BJ (cell line): ENCODE measurements at regions of chr2 and their contacts with region 1.

Region 1: GRCh38 chr2:119290859-119291587 is 67.4 kb downstream of the STEAP3 start:
- DNase-seq: no peak
- H3K4me3 ChIP-seq: no peak overlapping the region
- H3K27me3 ChIP-seq: no peaks in the 10 kb centered on the region
- CTCF ChIP-seq: peak; percentile 99

Region 2: GRCh38 chr2:118882709-118883210 is 408.3 kb before region 1 on chr2:
- CTCF ChIA-PET with region 1: interaction called, 71 read pairs
- POLR2A ChIA-PET with region 1: no interaction called
- DNase-seq: no peak
- H3K4me3 ChIP-seq: no peak overlapping the region
- H3K27me3 ChIP-seq: no peaks in the 10 kb centered on the region; the same call in 1 of the 2 replicates
- CTCF ChIP-seq: peak; percentile 87

Region 3: DNA sequence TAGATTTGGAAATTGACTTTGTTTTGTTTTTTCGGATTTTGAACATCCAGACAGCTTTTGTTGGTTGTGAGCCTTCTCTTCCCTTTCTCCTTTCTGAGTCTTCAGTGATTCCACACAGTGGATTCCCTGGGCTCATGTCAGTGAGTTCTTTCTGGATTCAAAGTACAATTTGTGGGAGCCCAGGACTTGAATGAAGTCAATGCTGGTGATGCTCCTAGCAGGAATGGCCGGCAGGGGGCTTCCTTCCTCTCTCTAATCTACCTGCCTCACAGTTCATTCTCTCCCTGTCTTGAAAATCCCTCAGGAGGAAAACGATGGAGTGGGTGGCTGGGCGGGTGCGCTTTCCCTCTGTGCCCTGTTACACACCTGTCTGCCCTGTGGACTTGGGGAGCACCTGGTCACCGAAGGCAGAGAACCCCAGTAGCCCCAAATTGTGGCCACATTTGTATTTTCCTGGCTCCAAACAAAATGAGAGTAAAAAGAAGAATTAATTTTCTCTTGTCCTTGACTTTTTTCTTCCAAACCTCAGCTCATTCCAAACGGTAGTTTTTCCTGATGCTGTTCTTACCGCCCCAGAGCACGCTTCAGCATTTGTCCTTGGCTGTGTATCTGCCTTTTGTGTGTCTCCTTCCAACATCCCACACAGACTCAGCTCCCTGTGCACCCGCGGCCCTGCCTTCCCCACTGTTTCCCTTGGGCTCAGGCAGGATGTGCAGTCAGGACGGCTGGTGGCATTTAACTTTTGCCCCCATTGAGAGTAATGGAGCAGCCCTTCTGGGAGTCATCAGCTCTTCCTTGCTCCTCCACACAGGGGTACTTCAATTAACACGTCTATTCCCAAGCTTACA is 262.5 kb before region 1 on chr2:
- CTCF ChIA-PET with region 1: interaction called, 30 read pairs
- POLR2A ChIA-PET with region 1: no interaction called
- DNase-seq: no peak
- H3K4me3 ChIP-seq: no peak overlapping the region
- H3K27me3 ChIP-seq: no peaks in the 10 kb centered on the region
- CTCF ChIP-seq: peak; percentile 58

Region 4: GRCh38 chr2:119223521-119224390 is 67.3 kb before region 1 on chr2 and contains the start of gene STEAP3:
- CTCF ChIA-PET with region 1: interaction called, 40 read pairs
- POLR2A ChIA-PET with region 1: no interaction called
- DNase-seq: no peak
- H3K4me3 ChIP-seq: peak within 1 kb of the TSS; percentile 65
- H3K27me3 ChIP-seq: no peaks in the 10 kb centered on the region; the same call in 1 of the 2 replicates
- CTCF ChIP-seq: no peak
- polyA plus RNA-seq, gene STEAP3: 7.7 and 13.9 TPM in 2 replicates

Region 5: DNA sequence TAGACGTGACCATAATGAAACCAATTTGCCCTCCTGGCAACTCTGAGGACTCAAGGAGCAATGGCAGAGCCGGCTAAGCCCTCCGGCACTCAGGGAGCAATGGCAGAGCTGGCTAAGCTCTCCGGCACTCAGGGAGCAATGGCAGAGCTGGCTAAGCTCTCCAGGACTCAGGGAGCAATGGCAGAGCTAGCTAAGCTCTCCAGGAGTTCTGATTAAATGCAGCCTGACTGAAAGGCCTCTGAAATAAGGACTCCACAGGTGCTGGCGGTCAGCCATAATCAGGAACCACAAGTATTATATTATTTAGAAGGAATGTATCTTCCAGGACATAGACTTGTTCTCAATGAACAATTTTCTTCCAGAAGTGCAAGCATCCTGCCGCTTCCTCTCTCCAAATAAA is 10.4 kb after region 1 on chr2:
- CTCF ChIA-PET with region 1: interaction called, 52 read pairs
- POLR2A ChIA-PET with region 1: no interaction called
- DNase-seq: no peak
- H3K4me3 ChIP-seq: no peak overlapping the region
- H3K27me3 ChIP-seq: no peaks in the 10 kb centered on the region
- CTCF ChIP-seq: no peak